Brain microvascular endothelial cell (primary cell): ENCODE measurements at regions of chr4 and their contacts with region 1.

Region 1: DNA sequence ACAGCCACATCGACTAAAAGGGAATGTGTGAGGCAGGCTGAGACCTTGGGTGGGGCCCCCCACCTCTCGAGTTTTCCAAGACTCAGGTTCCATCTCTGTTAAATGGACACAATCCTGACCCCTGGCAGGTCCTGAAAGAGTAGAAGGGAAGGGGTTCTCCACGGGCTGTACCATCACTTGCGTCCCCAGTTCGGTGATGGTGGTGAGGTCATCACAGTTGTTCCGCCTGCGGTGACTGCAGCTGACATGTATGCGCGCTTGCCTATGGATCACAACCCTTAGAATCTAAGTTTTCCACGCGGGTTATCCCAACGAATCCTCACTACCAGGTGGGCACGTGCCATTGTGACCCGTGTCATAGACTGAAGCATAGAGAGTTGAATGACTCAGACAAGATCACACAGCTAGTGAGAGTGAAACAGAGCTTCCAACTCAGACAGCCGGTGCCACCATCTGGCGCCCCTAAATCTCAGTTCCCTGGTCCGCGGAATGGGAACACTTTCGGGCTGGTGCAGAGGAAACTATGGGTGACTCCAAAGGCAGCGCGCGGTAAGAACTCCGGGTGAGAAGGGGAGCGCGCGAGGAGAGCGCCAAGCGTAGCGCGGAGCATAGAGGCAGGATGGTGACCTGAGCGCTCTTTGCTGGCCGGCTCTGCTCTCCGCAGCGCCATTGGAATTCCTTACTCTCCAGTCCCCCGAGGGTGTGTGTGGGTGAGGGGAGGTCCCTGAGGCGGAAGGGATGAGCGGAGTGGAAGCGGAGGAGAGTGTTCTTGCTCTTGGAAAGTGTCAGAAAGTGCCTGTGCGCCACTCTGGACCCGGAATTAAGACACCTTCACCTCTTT is 10.5 kb downstream of the MSX1 start:
- DNase-seq: no peak
- H3K4me3 ChIP-seq: no peak overlapping the region
- H3K27ac ChIP-seq: no peak overlapping the region
- H3K27me3 ChIP-seq: peaks cover 81% of the 10 kb centered on the region
- CTCF ChIP-seq: no peak

Region 2: GRCh38 chr4:4659871-4660651 is 209.9 kb before region 1 on chr4:
- in situ Hi-C with region 1: loop called (anchors 10 kb)
- DNase-seq: peak; percentile 91
- H3K4me3 ChIP-seq: no peak overlapping the region
- H3K27ac ChIP-seq: peak overlapping the region; percentile 91
- H3K27me3 ChIP-seq: peaks cover 2% of the 10 kb centered on the region
- CTCF ChIP-seq: peak; percentile 21